Esophagus squamous epithelium (tissue), 5 donors: ENCODE measurements at regions of chr17 and their contacts with region 1.

Region 1: DNA sequence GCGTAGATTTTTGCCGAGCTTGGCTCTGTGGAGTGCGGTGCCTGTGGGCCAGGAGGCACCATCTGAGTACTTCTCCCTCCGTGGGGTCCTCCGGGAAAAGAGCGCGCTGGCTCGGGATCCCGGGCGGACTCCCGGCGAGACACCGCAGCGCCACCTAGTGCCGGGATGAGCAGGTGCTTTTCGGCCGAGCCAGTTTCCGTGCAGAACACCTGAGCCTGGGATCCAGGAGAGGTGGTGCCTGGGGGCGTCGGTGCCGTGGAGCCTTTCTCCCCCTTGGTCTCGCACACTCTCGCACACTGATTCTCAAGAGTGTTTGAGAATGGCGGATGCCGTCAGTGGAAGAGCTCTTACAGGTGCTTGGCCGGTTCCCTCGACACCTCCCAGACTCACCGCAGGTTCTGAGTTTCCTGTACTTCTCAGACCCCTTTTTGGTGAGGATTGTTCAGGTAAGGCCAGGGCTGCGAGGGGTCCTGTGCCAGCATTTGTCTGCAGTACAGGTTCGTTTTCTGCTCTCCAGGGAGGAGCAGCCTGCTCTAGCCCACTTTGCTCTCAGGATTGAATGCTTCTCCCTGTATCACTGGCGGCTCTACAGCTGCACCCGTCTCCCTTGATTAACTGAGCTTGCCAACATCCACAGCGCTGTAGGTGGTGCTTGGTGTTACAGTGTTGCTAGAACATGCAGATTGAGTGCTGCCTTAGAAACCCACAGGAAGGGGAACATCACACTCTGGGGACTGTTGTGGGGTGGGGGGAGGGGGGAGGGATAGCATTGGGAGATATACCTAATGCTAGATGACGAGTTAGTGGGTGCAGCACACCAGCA is 23.3 kb downstream of the TBCD start:
- DNase-seq: no peak
- H3K4me3 ChIP-seq: peak overlapping the region in 3 of 4 donors; percentile 8 to 52 (median 11)
- H3K27ac ChIP-seq: no peak overlapping the region
- H3K4me1 ChIP-seq: peaks cover 0 to 35% (median 13%) of the 10 kb centered on the region in 3 donors
- H3K27me3 ChIP-seq: no peaks in the 10 kb centered on the region
- CTCF ChIP-seq: peak; percentile 52 to 91 (median 80)
- POLR2A ChIP-seq: no peak

Region 2: GRCh38 chr17:82668631-82669099 is 106.5 kb before region 1 on chr17:
- intact Hi-C with region 1: loop called (anchors 10 kb)
- DNase-seq: no peak
- H3K4me3 ChIP-seq: no peak overlapping the region
- H3K27ac ChIP-seq: peak overlapping the region in 2 of 4 donors; percentile 53 to 75
- H3K4me1 ChIP-seq: peaks cover 0 to 21% (median 3%) of the 10 kb centered on the region in 3 donors
- H3K27me3 ChIP-seq: no peaks in the 10 kb centered on the region
- CTCF ChIP-seq: peak in 5 of 6 experiments; percentile 38 to 78 (median 71)
- POLR2A ChIP-seq: no peak